A549 (cell line): ENCODE measurements at regions of chr1 and their contacts with region 1.

Region 1: GRCh38 chr1:15323351-15323988 is 76.4 kb downstream of the FHAD1 start:
- DNase-seq: peak; percentile 46 to 83
- ATAC-seq: peak; percentile 94 to 95
- H3K4me3 ChIP-seq: no peak overlapping the region
- H3K27ac ChIP-seq: peak overlapping the region; percentile 78 to 87
- H3K4me1 ChIP-seq: peaks cover 18% of the 10 kb centered on the region
- CTCF ChIP-seq: peak; percentile 85
- EP300 ChIP-seq: no peak
- POLR2A ChIP-seq: no peak
- RAD21 ChIP-seq: peak; percentile 82 to 84

Region 2: GRCh38 chr1:15075817-15076216 is 247.7 kb before region 1 on chr1:
- CTCF ChIA-PET with region 1: no interaction called
- POLR2A ChIA-PET with region 1: no interaction called
- DNase-seq: no peak
- ATAC-seq: peak in 1 of 2 experiments; percentile 30; a peak in 2 of 6 replicates
- H3K4me3 ChIP-seq: no peak overlapping the region
- H3K27ac ChIP-seq: no peak overlapping the region
- H3K4me1 ChIP-seq: no peaks in the 10 kb centered on the region
- CTCF ChIP-seq: no peak
- EP300 ChIP-seq: no peak
- POLR2A ChIP-seq: no peak
- RAD21 ChIP-seq: no peak

Region 3: DNA sequence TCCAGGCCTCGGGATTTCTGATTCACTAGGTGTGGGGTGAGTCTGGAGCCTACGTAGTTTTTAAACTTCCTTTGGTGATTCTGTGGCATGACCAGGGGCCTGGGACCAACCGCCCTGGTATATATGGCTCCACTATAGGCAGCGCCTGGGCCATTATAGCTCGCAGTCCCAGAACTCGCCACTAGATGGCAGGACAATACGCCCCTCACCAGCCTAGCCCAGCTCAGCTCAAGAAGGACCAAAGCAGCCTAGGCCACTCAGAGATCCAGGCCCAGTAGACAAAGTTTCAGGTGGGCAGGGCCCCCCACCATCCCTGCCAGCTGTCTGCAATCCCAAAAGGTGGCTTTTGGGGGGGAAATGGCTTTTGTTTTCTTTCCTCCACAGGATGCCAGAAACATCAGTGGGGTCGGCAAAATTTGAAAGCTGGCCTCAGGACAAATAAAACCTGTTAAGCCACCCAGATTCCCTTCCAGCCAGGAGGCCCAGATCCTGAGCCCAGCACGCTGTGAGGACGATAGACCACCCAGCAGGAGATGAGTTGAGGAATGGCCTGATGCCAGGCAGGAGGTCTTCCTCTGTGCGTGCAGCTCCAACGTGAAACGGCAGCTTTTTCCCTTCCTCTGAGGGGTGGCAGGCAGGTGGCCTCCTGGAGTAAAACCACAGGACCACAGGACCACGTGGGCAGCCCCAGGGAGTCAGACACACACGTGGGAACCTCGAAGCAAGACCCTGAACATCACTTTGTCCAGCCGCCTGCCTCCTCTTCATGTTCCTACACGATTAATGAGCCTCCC is 194.8 kb before region 1 on chr1:
- CTCF ChIA-PET with region 1: interaction called, 10 read pairs
- POLR2A ChIA-PET with region 1: no interaction called
- DNase-seq: peak; percentile 67 to 70
- ATAC-seq: peak; percentile 97 to 100
- H3K4me3 ChIP-seq: no peak overlapping the region
- H3K27ac ChIP-seq: peak overlapping the region in 1 of 2 experiments; percentile 51; a peak in 3 of 6 replicates
- H3K4me1 ChIP-seq: no peaks in the 10 kb centered on the region
- CTCF ChIP-seq: peak; percentile 72
- EP300 ChIP-seq: no peak
- POLR2A ChIP-seq: no peak
- RAD21 ChIP-seq: peak; percentile 80 to 87

Region 4: GRCh38 chr1:15287035-15287979 is 36.2 kb before region 1 on chr1:
- CTCF ChIA-PET with region 1: no interaction called
- POLR2A ChIA-PET with region 1: no interaction called
- DNase-seq: no peak
- ATAC-seq: no peak
- H3K4me3 ChIP-seq: no peak overlapping the region
- H3K27ac ChIP-seq: peak overlapping the region; percentile 68 to 83; a peak in 5 of 6 replicates
- H3K4me1 ChIP-seq: peaks cover 35% of the 10 kb centered on the region
- CTCF ChIP-seq: no peak
- EP300 ChIP-seq: no peak
- POLR2A ChIP-seq: no peak
- RAD21 ChIP-seq: no peak

Region 5: GRCh38 chr1:15337656-15338402 is 14.4 kb after region 1 on chr1:
- CTCF ChIA-PET with region 1: interaction called, 40 read pairs
- POLR2A ChIA-PET with region 1: no interaction called
- DNase-seq: no peak
- ATAC-seq: peak; percentile 59 to 65; a peak in 4 of 6 replicates
- H3K4me3 ChIP-seq: no peak overlapping the region
- H3K27ac ChIP-seq: peak overlapping the region; percentile 28 to 77; a peak in 4 of 6 replicates
- H3K4me1 ChIP-seq: peaks cover 31% of the 10 kb centered on the region
- CTCF ChIP-seq: no peak
- EP300 ChIP-seq: no peak
- POLR2A ChIP-seq: no peak
- RAD21 ChIP-seq: no peak

Region 6: GRCh38 chr1:15400627-15401026 is 77.2 kb after region 1 on chr1:
- CTCF ChIA-PET with region 1: interaction called, 14 read pairs
- POLR2A ChIA-PET with region 1: no interaction called
- DNase-seq: no peak
- ATAC-seq: no peak
- H3K4me3 ChIP-seq: no peak overlapping the region
- H3K27ac ChIP-seq: no peak overlapping the region
- H3K4me1 ChIP-seq: no peaks in the 10 kb centered on the region
- CTCF ChIP-seq: no peak
- EP300 ChIP-seq: no peak
- POLR2A ChIP-seq: no peak
- RAD21 ChIP-seq: no peak

Region 7: DNA sequence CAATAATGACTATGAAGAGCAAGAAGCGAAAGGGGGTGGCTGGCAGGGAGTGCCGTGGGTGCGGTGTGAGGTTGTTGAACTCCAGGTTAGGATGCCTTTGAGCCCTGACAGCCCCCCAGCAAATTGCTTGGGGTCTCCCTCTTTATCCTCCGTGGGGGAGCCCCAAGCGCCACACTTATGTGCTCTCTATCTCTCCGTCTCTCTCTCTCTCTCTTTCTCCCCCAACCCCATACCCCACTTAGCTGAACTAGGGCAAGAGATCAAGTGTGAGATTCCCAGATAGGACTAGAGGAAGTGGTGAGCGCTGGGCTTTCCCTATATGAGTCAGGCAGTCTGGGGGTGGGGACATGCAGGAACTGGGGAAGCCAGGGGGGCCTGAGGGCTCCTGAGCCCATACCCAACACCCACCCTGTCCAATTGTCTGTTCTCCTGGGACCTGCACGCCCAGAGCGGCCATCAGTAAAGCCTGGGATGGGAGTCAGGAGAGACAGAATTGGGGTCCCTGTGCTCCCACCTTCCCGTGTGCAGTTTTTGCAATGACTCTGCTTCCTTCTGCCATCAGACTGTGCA is 94.0 kb after region 1 on chr1:
- CTCF ChIA-PET with region 1: interaction called, 31 read pairs
- POLR2A ChIA-PET with region 1: no interaction called
- DNase-seq: peak; percentile 56 to 72
- ATAC-seq: peak; percentile 72 to 76
- H3K4me3 ChIP-seq: 0 out of 3 replicates have a peak overlapping the region, but pooled peaks have one; percentile 2
- H3K27ac ChIP-seq: peak overlapping the region; percentile 73 to 97
- H3K4me1 ChIP-seq: peaks cover 69% of the 10 kb centered on the region
- CTCF ChIP-seq: no peak
- EP300 ChIP-seq: 0 out of 5 replicates have a peak, but pooled peaks of 1 of the 2 experiments have one; percentile 24
- POLR2A ChIP-seq: no peak
- RAD21 ChIP-seq: no peak

Region 8: GRCh38 chr1:15436881-15437442 is 113.5 kb after region 1 on chr1:
- CTCF ChIA-PET with region 1: interaction called, 150 read pairs
- POLR2A ChIA-PET with region 1: interaction called, 11 read pairs
- DNase-seq: no peak
- ATAC-seq: peak in 1 of 2 experiments; percentile 2; a peak in 2 of 6 replicates
- H3K4me3 ChIP-seq: no peak overlapping the region
- H3K27ac ChIP-seq: no peak overlapping the region
- H3K4me1 ChIP-seq: peaks cover 17% of the 10 kb centered on the region
- CTCF ChIP-seq: no peak
- EP300 ChIP-seq: no peak
- POLR2A ChIP-seq: no peak
- RAD21 ChIP-seq: no peak